IMR-90 (cell line): ENCODE measurements at regions of chr17 and their contacts with region 1.

Region 1: DNA sequence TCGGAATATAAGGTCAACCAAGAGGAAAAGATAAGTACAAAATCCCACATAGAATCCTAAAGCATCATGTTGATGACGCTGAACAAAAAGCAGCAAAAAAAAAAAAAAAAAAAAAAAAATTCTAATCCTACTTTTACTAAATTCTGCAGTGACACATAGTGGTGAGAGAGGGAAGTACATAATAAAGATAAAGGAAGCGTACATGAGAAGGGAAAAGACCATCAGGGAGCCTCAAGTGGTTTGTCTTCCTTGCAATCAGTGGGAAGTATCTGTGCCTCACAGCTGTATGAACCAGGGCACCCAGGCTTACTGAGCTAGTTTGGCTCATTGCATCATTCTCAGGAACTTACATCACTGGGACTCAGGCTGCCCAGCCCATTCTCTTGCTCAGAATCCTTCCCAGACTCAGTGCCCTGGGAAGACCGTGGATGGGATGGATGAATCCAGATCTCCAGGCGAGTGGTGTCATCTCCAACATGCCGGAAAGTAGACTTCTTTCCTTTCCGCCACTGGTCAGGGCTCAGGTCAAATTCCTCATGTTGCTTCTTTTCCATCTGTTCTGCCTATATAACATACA is 21.2 kb downstream of the SMG6 start:
- DNase-seq: peak; percentile 91
- ATAC-seq: peak; percentile 95
- H3K4me3 ChIP-seq: no peak overlapping the region
- H3K27ac ChIP-seq: 0 out of 2 replicates have a peak overlapping the region, but pooled peaks have one; percentile 7
- H3K4me1 ChIP-seq: peaks cover 7% of the 10 kb centered on the region
- H3K27me3 ChIP-seq: no peaks in the 10 kb centered on the region
- CTCF ChIP-seq: peak; percentile 66
- POLR2A ChIP-seq: no peak
- RAD21 ChIP-seq: peak; percentile 68

Region 2: DNA sequence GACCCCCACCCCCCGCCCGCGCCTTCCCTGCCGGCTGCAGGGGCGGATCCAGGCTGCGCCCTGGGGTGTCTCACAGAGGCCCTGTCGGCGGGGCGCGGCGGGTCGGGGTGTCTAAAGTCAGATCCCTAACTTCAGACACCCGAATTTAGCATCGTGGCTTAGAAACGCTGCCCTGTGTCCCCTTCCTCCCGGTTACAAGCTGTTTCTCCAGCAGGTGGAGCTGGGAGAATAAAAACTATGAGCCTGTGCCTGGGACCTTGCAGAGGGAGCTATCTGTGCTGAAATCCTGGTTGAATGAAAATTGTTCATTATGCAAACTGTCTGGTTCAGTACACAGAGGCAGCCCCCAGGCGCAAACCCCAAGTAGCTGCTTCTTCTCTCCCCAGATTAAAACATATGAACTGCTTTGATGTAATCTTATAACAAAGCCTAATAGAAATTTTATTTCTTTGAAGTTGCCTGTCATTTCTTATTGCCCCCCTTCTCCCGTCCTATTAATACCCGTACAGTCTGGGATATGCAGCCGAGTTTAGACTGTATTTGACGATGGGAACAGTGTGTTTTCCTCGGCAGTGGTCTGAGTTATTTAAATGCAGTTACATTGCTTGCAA is 373.6 kb before region 1 on chr17:
- CTCF ChIA-PET with region 1: no interaction called
- POLR2A ChIA-PET with region 1: no interaction called
- dilution Hi-C with region 1: no loop called
- in situ Hi-C with region 1: loop called (anchors 10 kb)
- intact Hi-C with region 1: loop called (anchors 1 kb)
- DNase-seq: peak; percentile 73
- ATAC-seq: peak; percentile 97
- H3K4me3 ChIP-seq: no peak overlapping the region
- H3K27ac ChIP-seq: no peak overlapping the region
- H3K4me1 ChIP-seq: no peaks in the 10 kb centered on the region; the same call in 1 of the 2 replicates
- H3K27me3 ChIP-seq: peaks cover 72% of the 10 kb centered on the region
- CTCF ChIP-seq: peak; percentile 83
- POLR2A ChIP-seq: no peak
- RAD21 ChIP-seq: peak; percentile 86

Region 3: DNA sequence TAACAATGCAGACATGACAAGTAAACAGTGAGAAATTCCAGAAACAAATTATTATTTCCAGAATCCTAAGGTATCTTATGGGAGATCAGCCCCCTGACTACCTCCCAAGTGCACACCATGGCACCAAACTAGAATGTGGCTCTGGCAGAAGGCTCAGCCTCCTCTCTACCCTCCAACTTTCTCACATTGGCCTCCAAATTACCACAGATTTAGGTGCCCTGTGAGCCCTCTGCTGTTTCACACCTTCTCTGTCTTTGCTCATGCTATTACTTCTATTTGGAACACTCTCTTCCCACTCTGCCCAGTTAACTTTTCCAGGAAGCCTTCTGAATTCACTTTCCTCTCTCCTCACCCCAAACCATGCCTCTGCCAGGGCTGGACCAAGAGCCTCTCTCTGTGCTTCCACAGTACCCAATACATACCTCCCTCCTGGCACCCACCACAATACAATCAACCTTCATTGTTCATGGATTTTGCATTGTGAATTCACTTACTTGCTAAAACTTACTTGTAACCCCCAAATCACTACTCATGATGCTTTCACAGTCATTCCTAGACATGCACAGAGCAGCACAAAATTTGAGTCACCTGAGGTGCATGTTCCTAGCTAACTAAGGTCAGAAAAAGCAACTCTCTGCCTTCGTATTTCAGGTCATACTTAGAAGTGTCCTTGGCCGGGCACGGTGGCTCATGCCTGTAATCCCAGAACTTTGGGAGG is 10.2 kb before region 1 on chr17:
- CTCF ChIA-PET with region 1: no interaction called
- POLR2A ChIA-PET with region 1: no interaction called
- dilution Hi-C with region 1: no loop called
- in situ Hi-C with region 1: no loop called
- intact Hi-C with region 1: no loop called
- DNase-seq: no peak
- ATAC-seq: no peak
- H3K4me3 ChIP-seq: no peak overlapping the region
- H3K27ac ChIP-seq: no peak overlapping the region
- H3K4me1 ChIP-seq: no peaks in the 10 kb centered on the region
- H3K27me3 ChIP-seq: no peaks in the 10 kb centered on the region
- CTCF ChIP-seq: no peak
- POLR2A ChIP-seq: no peak
- RAD21 ChIP-seq: no peak